ENCODE measurements at regions of chr12 and their contacts with region 1.

Region 1: DNA sequence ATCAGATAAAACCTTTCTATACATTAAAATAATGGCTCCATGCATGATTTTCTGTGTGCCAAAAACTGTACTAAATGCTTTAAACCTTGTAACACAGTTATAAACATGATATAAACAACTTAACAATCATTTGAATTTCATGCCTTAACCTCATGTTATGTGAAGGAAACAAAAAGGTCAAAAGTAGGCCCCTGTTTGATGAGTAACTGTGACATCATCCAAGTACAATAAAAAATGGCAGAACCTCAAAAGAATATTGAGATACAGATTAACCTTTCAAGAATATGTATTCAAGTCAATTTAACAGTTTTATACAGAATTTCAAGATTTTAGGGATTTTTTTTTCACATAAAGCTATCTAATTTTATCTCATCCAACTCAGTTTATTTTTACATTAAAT is 310.7 kb upstream of the DCN start:
- DNase-seq: no peak
- H3K4me3 ChIP-seq: no peak overlapping the region
- H3K27ac ChIP-seq: no peak overlapping the region
- H3K4me1 ChIP-seq: no peaks in the 10 kb centered on the region
- H3K27me3 ChIP-seq: no peaks in the 10 kb centered on the region
- CTCF ChIP-seq: no peak
- POLR2A ChIP-seq: no peak

Region 2: GRCh38 chr12:91397866-91398532 is 95.3 kb before region 1 on chr12:
- intact Hi-C with region 1: loop called (anchors 10 kb)
- DNase-seq: no peak
- H3K4me3 ChIP-seq: no peak overlapping the region
- H3K27ac ChIP-seq: no peak overlapping the region
- H3K4me1 ChIP-seq: no peaks in the 10 kb centered on the region
- H3K27me3 ChIP-seq: no peaks in the 10 kb centered on the region
- CTCF ChIP-seq: no peak
- POLR2A ChIP-seq: no peak